GM12878 (cell line): ENCODE measurements at regions of chr17 and their contacts with region 1.

Region 1: DNA sequence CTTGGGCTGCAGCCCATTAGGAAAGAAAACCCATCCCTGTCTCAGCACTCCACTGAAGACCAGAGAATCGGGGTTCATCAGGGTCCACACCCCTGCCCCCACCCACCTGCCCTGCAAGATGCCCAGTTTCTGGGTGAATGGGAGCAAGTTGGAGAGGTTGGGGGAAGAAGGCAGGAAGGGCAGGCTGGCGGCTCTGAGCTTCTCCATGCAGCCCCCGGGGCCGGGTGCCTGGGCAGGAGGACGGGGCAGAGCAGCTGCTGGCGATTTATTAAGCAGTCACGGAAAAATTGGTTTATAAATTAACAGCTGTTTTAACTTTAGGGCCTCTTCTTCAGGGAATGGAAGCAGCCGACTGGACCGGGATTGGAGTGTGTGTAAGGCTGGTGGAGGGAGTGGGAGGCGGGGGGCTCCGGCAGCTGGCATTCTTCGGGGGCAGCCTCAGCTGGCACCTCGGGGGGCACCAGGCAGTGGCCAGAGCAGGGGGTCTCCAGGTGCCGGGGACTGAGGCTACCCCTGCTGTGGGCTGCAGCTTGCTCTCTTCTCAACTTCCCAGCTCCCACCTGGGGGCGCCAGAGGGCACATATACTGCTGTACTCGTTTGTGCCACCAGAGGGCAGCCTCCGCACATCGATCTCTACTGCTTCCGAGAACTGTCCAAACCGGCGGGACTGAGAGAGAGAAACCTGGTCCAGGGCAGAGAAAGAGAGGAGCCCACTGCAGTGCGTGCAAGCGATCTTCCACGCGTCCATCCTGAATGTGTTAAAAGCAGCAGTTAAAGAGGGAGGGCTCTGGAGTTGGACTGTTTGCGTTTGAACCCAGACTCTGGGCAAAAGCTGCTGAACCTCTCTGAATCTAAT is 5.0 kb upstream of the PPP1R1B start:
- DNase-seq: peak; percentile 56
- ATAC-seq: peak; percentile 79
- H3K4me3 ChIP-seq: peak overlapping the region; percentile 46; the same call in 1 of the 2 replicates
- H3K27ac ChIP-seq: no peak overlapping the region
- H3K4me1 ChIP-seq: peaks cover 5% of the 10 kb centered on the region
- H3K27me3 ChIP-seq: peaks cover 3 to 5% of the 10 kb centered on the region in 2 experiments
- CTCF ChIP-seq: peak; percentile 100; a peak in 5 of 6 replicates
- EP300 ChIP-seq: no peak
- POLR2A ChIP-seq: no peak
- RAD21 ChIP-seq: peak; percentile 95

Region 2: GRCh38 chr17:39335704-39336223 is 286.0 kb before region 1 on chr17:
- CTCF ChIA-PET with region 1: no interaction called
- POLR2A ChIA-PET with region 1: no interaction called
- RAD21 ChIA-PET with region 1: no interaction called
- SMC1A ChIA-PET with region 1: no interaction called
- in situ Hi-C with region 1: no loop called
- intact Hi-C with region 1: no loop called
- DNase-seq: no peak
- ATAC-seq: no peak
- H3K4me3 ChIP-seq: no peak overlapping the region
- H3K27ac ChIP-seq: no peak overlapping the region
- H3K4me1 ChIP-seq: no peaks in the 10 kb centered on the region
- H3K27me3 ChIP-seq: no peaks in the 10 kb centered on the region
- CTCF ChIP-seq: no peak
- EP300 ChIP-seq: no peak
- POLR2A ChIP-seq: no peak
- RAD21 ChIP-seq: no peak

Region 3: DNA sequence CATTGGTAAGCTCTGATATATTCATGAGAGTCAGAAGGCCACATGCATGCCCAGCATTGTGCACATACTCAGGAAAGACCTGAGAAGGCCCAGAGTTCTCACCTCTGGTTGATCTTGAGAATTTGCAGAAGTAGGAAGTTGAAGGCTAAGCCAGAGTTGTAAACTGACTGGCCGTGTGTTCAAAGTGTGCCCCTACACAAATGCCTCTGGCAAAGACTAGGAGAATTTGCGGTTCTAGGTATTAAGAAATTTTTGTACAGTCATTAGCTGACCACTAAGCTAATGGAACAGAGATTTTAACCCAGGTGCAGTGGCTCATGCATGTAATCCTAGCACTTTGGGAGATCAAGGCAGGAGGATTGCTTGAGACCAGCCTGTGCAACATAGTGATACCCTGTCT is 245.3 kb before region 1 on chr17:
- CTCF ChIA-PET with region 1: no interaction called
- POLR2A ChIA-PET with region 1: no interaction called
- RAD21 ChIA-PET with region 1: no interaction called
- SMC1A ChIA-PET with region 1: no interaction called
- in situ Hi-C with region 1: no loop called
- intact Hi-C with region 1: no loop called
- DNase-seq: peak; percentile 23
- ATAC-seq: peak; percentile 61
- H3K4me3 ChIP-seq: no peak overlapping the region
- H3K27ac ChIP-seq: peak overlapping the region; percentile 25; the same call in 1 of the 2 replicates
- H3K4me1 ChIP-seq: peaks cover 16% of the 10 kb centered on the region
- H3K27me3 ChIP-seq: no peaks in the 10 kb centered on the region
- CTCF ChIP-seq: no peak
- EP300 ChIP-seq: no peak
- POLR2A ChIP-seq: no peak
- RAD21 ChIP-seq: no peak

Region 4: GRCh38 chr17:39636927-39637736 is 15.4 kb after region 1 on chr17 and contains the start of gene STARD3:
- CTCF ChIA-PET with region 1: interaction called, 225 read pairs
- POLR2A ChIA-PET with region 1: no interaction called
- RAD21 ChIA-PET with region 1: interaction called, 20 read pairs
- SMC1A ChIA-PET with region 1: interaction called, 10 read pairs
- in situ Hi-C with region 1: no loop called
- intact Hi-C with region 1: no loop called
- DNase-seq: no peak
- ATAC-seq: peak; percentile 97
- H3K4me3 ChIP-seq: peak within 1 kb of the TSS; percentile 100
- H3K27ac ChIP-seq: peak within 1 kb of the TSS; percentile 90
- H3K4me1 ChIP-seq: peaks cover 20% of the 10 kb centered on the region
- H3K27me3 ChIP-seq: no peaks in the 10 kb centered on the region
- CTCF ChIP-seq: peak in 1 of 3 experiments; percentile 12; a peak in 2 of 6 replicates
- EP300 ChIP-seq: no peak
- POLR2A ChIP-seq: peak; percentile 91
- RAD21 ChIP-seq: no peak
- polyA plus RNA-seq, gene STARD3: 0.08 to 1.4 TPM

Region 5: GRCh38 chr17:39676198-39676819 is 54.6 kb after region 1 on chr17:
- CTCF ChIA-PET with region 1: interaction called, 114 read pairs
- POLR2A ChIA-PET with region 1: no interaction called
- RAD21 ChIA-PET with region 1: interaction called, 14 read pairs
- SMC1A ChIA-PET with region 1: interaction called, 11 read pairs
- in situ Hi-C with region 1: no loop called
- intact Hi-C with region 1: no loop called
- DNase-seq: peak; percentile 13
- ATAC-seq: peak; percentile 83
- H3K4me3 ChIP-seq: no peak overlapping the region
- H3K27ac ChIP-seq: no peak overlapping the region
- H3K4me1 ChIP-seq: peaks cover 44% of the 10 kb centered on the region
- H3K27me3 ChIP-seq: no peaks in the 10 kb centered on the region
- CTCF ChIP-seq: no peak
- EP300 ChIP-seq: 0 out of 4 replicates have a peak, but pooled peaks of 1 of the 2 experiments have one; percentile 32
- POLR2A ChIP-seq: no peak
- RAD21 ChIP-seq: no peak

Region 6: DNA sequence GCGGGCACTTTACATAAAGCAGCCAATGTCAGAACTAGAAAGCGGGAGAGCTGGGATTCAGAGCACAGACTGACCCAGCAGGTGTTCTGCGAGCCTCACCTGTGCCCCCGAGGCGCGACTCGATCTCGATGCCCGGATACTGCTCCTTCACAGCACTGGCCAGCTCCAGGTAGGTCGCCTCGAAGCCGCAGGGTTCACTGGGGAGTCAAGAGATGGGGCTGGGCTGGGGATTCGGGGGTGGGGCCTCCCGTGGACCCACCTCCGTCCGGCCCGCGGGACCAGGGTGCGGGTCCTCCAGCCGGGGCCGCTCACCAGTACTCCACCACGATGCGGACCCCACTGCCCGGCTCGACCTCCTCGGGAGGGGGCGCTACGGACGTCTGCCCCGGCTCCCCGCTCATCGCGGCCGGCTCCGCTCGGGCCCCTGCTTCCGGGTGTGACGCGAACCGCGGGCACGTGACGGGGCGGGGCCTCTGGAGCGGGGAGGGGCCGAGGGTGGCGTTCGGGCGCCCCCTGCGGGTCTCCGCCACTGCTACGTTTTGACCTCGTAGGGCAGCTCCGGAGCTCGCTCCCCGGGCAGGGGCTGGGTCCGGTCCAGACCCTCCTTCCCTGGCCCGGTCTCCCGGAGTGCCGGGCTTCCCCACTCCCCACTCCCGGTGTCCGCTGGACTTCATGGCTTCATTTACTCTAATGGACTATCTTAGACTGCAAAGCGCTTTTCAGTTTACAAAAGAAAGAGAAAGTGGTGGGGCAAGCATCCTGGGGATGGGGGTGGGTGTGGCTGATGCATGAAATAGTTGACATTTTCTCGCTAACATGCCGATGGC is 108.6 kb after region 1 on chr17 and contains the start of gene MIEN1:
- CTCF ChIA-PET with region 1: interaction called, 79 read pairs
- POLR2A ChIA-PET with region 1: no interaction called
- RAD21 ChIA-PET with region 1: interaction called, 13 read pairs
- SMC1A ChIA-PET with region 1: interaction called, 20 read pairs
- in situ Hi-C with region 1: no loop called
- intact Hi-C with region 1: loop called (anchors 5 kb)
- DNase-seq: peak; percentile 43
- ATAC-seq: peak; percentile 96
- H3K4me3 ChIP-seq: peak within 1 kb of the TSS; percentile 91
- H3K27ac ChIP-seq: peak within 1 kb of the TSS; percentile 88
- H3K4me1 ChIP-seq: peaks cover 3% of the 10 kb centered on the region; the same call in 1 of the 2 replicates
- H3K27me3 ChIP-seq: no peaks in the 10 kb centered on the region
- CTCF ChIP-seq: peak; percentile 71 to 90 (median 85)
- EP300 ChIP-seq: 0 out of 4 replicates have a peak, but pooled peaks of 1 of the 2 experiments have one; percentile 13
- POLR2A ChIP-seq: peak; percentile 98
- RAD21 ChIP-seq: peak; percentile 44
- polyA plus RNA-seq, gene MIEN1: 24.9 to 42.5 TPM

Region 7: GRCh38 chr17:39863918-39864746 is 242.4 kb after region 1 on chr17 and contains the start of gene IKZF3:
- CTCF ChIA-PET with region 1: interaction called, 70 read pairs
- POLR2A ChIA-PET with region 1: no interaction called
- RAD21 ChIA-PET with region 1: interaction called, 6 read pairs
- SMC1A ChIA-PET with region 1: interaction called, 5 read pairs
- in situ Hi-C with region 1: no loop called
- intact Hi-C with region 1: loop called (anchors 5 kb)
- DNase-seq: no peak
- ATAC-seq: peak; percentile 57
- H3K4me3 ChIP-seq: peak within 1 kb of the TSS; percentile 78
- H3K27ac ChIP-seq: peak within 1 kb of the TSS; percentile 100
- H3K4me1 ChIP-seq: peaks cover 35% of the 10 kb centered on the region
- H3K27me3 ChIP-seq: no peaks in the 10 kb centered on the region
- CTCF ChIP-seq: peak; percentile 53 to 85 (median 59); a peak in 5 of 6 replicates
- EP300 ChIP-seq: peak; percentile 20 to 34; a peak in 1 of 4 replicates
- POLR2A ChIP-seq: peak; percentile 89
- RAD21 ChIP-seq: peak; percentile 77
- polyA plus RNA-seq, gene IKZF3: 5.5 to 14.0 TPM

Region 8: DNA sequence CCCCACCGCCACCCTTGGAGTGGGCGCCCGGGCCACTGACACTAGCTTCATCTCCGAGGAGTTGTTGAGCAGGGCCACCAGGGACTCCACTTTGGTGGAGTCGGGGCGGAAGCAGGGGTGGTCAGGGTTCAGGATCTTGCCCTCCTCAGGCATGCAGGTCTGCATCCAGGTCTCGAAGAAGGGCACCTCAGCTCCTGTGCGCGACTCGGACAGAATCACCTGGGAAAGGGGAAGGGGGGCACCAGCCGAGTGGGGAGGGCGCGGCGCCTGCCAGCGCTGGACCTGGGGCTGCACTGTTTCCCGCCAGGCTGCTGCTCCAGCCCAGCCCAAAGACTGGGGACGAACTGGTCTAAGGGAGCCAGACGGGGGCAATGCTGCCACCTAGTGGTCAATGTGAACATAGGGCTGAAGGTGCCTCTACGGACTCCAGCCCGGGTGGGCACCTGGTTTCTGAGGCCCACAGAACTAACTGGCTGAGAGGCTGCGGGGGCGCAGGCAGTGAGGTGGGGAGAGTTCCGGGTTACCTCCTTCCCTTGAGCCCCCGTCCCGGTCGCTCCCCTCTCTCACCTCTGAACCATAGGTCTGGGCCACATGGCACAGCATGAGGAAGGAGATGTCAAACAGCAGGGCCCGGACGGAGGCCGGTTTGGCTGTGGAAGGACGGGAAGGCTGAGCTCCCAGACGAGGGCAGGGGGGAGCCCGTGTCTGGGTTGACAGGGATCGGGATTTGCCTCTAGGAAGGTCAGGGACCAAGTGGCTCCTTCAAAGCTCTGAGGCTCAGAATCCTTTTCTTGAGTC is 405.3 kb after region 1 on chr17:
- CTCF ChIA-PET with region 1: interaction called, 13 read pairs
- POLR2A ChIA-PET with region 1: no interaction called
- RAD21 ChIA-PET with region 1: interaction called, 12 read pairs
- SMC1A ChIA-PET with region 1: no interaction called
- in situ Hi-C with region 1: no loop called
- intact Hi-C with region 1: loop called (anchors 5 kb)
- DNase-seq: peak; percentile 12
- ATAC-seq: peak; percentile 100
- H3K4me3 ChIP-seq: no peak overlapping the region
- H3K27ac ChIP-seq: no peak overlapping the region
- H3K4me1 ChIP-seq: no peaks in the 10 kb centered on the region
- H3K27me3 ChIP-seq: no peaks in the 10 kb centered on the region
- CTCF ChIP-seq: peak; percentile 80 to 88 (median 86)
- EP300 ChIP-seq: no peak
- POLR2A ChIP-seq: no peak
- RAD21 ChIP-seq: peak; percentile 63